Activated T-helper 2 cell treated with anti-CD3 and anti-CD28 coated beads, Interferon-gamma antibody, Interleukin-2, Interleukin-4, amounts not matched to agents 10 μg/mL and 5 μg/mL and 100 μg/mL, durations not matched to agents 14 hours and 24 hours and 36 hours (primary cell): ENCODE measurements at regions of chr3 and their contacts with region 1.

Region 1: DNA sequence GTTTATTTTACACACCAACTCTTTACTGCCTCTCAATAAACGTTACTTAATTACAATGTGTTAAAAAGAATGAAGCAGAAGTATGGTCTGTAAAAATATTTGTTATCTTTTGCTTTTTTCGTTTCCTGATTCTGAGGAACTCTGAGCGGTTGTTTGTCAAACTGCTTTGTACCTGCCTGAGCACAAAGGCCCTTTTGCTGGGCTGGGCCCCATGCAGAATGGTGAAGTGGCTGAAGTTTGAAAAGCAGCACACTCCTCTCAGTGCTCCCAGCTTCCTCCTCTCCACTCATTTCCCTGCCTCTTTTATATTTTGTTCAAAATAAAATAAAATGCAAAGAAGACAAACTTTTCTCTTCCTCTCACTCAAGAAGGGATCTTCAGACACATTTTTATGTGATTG is 229.5 kb downstream of the NFKBIZ start:
- DNase-seq: no peak
- H3K4me3 Mint-ChIP-seq: peak overlapping the region; percentile 18
- H3K27ac Mint-ChIP-seq: peak overlapping the region; percentile 86
- H3K4me1 Mint-ChIP-seq: peaks cover 46% of the 10 kb centered on the region
- H3K27me3 Mint-ChIP-seq: no peaks in the 10 kb centered on the region

Region 2: GRCh38 chr3:102060814-102061213 is 18.0 kb before region 1 on chr3:
- intact Hi-C with region 1: loop called (anchors 2 kb)
- DNase-seq: no peak
- H3K4me3 Mint-ChIP-seq: no peak overlapping the region
- H3K27ac Mint-ChIP-seq: no peak overlapping the region
- H3K4me1 Mint-ChIP-seq: peaks cover 29% of the 10 kb centered on the region
- H3K27me3 Mint-ChIP-seq: no peaks in the 10 kb centered on the region